Mammary epithelial cell (primary cell): ENCODE measurements at regions of chr22 and their contacts with region 1.

Region 1: GRCh38 chr22:45602824-45603630 is 68.6 kb upstream of the ATXN10 start:
- DNase-seq: no peak
- H3K4me3 ChIP-seq: no peak overlapping the region
- H3K27ac ChIP-seq: peak overlapping the region; percentile 83
- H3K4me1 ChIP-seq: peaks cover 37% of the 10 kb centered on the region
- H3K27me3 ChIP-seq: no peaks in the 10 kb centered on the region
- CTCF ChIP-seq: no peak

Region 2: GRCh38 chr22:45526768-45527360 is 76.2 kb before region 1 on chr22:
- CTCF ChIA-PET with region 1: no interaction called
- dilution Hi-C with region 1: loop called (anchors 5 kb)
- in situ Hi-C with region 1: no loop called
- intact Hi-C with region 1: no loop called
- DNase-seq: no peak
- H3K4me3 ChIP-seq: no peak overlapping the region
- H3K27ac ChIP-seq: no peak overlapping the region
- H3K4me1 ChIP-seq: peaks cover 16% of the 10 kb centered on the region
- H3K27me3 ChIP-seq: no peaks in the 10 kb centered on the region
- CTCF ChIP-seq: no peak